ENCODE measurements at regions of chr1 and their contacts with region 1.

Region 1: GRCh38 chr1:157490467-157491165 is 61.7 kb downstream of the FCRL5 start:
- DNase-seq: peak; percentile 43 to 82 (median 47)
- ATAC-seq: peak; percentile 84
- H3K4me3 ChIP-seq: no peak overlapping the region
- H3K27ac ChIP-seq: no peak overlapping the region
- H3K4me1 ChIP-seq: peaks cover 7 to 18% of the 10 kb centered on the region in 2 experiments; a peak in 4 of 5 replicates
- H3K27me3 ChIP-seq: peaks cover 0 to 9% of the 10 kb centered on the region in 2 experiments; a peak in 2 of 5 replicates
- CTCF ChIP-seq: peak; percentile 74 to 88 (median 85)
- EP300 ChIP-seq: no peak
- POLR2A ChIP-seq: no peak
- RAD21 ChIP-seq: peak; percentile 79 to 85

Region 2: DNA sequence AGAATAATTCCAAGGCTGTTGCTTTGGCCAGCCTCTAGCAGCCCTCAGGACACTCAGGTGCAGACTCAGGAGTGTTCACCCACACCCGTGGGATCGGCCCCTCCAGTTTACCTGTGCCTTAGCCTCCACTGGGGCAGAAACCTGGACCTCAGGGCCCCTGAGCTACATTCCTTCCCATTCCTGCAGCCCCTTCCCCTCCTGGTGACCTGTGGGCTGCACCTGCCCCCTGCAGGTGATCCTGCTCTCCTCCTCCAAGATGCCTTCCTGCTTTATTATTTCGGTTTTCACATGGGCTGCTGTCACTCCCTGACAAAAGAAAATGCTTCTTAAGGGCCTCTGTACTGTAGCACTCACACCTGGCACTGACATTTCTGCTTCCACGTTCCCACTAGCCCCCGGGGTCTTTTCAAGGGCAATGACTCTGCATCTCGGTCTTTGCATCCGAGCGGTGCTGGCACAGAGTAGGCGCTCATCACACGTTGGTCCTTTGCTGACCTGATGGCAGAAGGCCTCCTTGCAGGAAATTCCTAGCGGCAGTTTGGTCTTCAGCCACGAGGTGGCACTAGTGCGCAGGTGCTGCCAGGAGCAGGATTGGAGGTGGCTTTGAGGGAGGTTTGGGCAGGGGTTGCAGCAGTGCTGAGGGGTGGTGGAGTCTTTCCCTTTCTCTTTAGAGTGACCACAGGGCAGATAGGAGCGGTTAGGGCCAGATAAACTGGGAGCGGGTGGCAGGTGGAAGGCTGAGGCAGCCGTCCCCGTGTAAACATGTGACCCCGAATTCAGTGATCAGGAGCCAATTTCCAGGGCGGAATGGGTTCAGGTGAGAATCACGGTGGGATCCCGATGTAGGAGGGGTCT is 327.1 kb before region 1 on chr1:
- CTCF ChIA-PET with region 1: no interaction called
- POLR2A ChIA-PET with region 1: no interaction called
- in situ Hi-C with region 1: loop called (anchors 10 kb)
- intact Hi-C with region 1: no loop called
- DNase-seq: peak; percentile 72 to 80 (median 76)
- ATAC-seq: peak; percentile 92
- H3K4me3 ChIP-seq: no peak overlapping the region
- H3K27ac ChIP-seq: no peak overlapping the region
- H3K4me1 ChIP-seq: peaks cover 0 to 4% of the 10 kb centered on the region in 2 experiments; a peak in 1 of 5 replicates
- H3K27me3 ChIP-seq: peaks cover 40 to 74% of the 10 kb centered on the region in 2 experiments
- CTCF ChIP-seq: peak; percentile 84 to 94 (median 89)
- EP300 ChIP-seq: no peak
- POLR2A ChIP-seq: no peak
- RAD21 ChIP-seq: peak; percentile 37 to 53; a peak in 3 of 4 replicates

Region 3: GRCh38 chr1:157307491-157307890 is 183.1 kb before region 1 on chr1:
- CTCF ChIA-PET with region 1: interaction called, 25 read pairs
- POLR2A ChIA-PET with region 1: no interaction called
- in situ Hi-C with region 1: loop called (anchors 5 kb)
- intact Hi-C with region 1: loop called (anchors 1 kb)
- DNase-seq: no peak
- ATAC-seq: no peak
- H3K4me3 ChIP-seq: no peak overlapping the region
- H3K27ac ChIP-seq: no peak overlapping the region
- H3K4me1 ChIP-seq: peaks cover 10 to 32% of the 10 kb centered on the region in 2 experiments
- H3K27me3 ChIP-seq: no peaks in the 10 kb centered on the region
- CTCF ChIP-seq: no peak
- EP300 ChIP-seq: no peak
- POLR2A ChIP-seq: no peak
- RAD21 ChIP-seq: no peak

Region 4: DNA sequence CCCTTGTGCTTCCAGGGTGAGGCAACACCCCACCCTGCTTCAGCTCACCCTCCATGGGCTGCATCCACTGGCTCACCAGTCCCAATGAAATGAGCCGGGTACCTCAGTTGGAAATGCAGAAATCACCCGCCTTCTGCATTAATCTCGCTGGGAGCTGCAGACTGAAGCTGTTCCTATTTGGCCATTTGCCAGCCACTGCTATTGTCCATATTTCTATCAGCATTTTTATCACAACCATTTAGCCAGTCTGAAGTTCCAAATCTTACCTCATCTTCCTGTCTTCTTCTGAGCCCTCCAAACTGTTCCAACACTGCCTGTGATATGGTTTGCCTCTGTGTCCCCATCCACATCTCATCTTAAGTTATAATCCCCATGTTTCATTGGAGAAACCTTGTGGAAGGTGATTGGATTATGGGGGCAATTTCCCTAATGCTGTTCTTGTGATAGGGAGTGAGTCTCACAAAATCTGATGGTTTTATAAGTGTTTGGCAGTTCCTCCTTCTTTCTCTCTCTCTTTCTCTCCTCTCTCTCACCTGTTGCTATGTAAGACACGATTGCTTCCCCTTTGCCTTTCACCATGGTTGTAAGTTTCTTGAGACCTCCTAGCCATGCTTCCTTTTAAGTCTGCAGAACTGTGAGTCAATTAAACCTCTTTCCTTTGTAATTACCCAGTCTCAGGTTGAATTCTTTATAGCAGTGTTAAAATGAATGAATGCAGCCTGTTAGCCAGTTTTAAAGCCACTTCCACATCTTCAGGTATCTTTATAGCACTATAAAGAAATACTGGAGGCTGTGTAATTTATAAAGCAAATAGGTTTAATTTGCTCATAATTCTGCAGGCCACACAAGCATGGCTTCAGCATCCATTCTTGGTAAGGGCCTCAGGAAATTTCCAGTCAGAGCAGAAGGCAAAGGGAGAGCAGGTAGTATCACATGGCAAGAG is 141.8 kb before region 1 on chr1:
- CTCF ChIA-PET with region 1: no interaction called
- POLR2A ChIA-PET with region 1: no interaction called
- in situ Hi-C with region 1: no loop called
- intact Hi-C with region 1: no loop called
- DNase-seq: no peak
- ATAC-seq: no peak
- H3K4me3 ChIP-seq: no peak overlapping the region
- H3K27ac ChIP-seq: no peak overlapping the region
- H3K4me1 ChIP-seq: no peaks in the 10 kb centered on the region; a peak in 2 of 5 replicates
- H3K27me3 ChIP-seq: no peaks in the 10 kb centered on the region
- CTCF ChIP-seq: no peak
- EP300 ChIP-seq: no peak
- POLR2A ChIP-seq: no peak
- RAD21 ChIP-seq: no peak

Region 5: GRCh38 chr1:157369808-157370521 is 120.7 kb before region 1 on chr1:
- CTCF ChIA-PET with region 1: interaction called, 13 read pairs
- POLR2A ChIA-PET with region 1: no interaction called
- in situ Hi-C with region 1: loop called (anchors 5 kb)
- intact Hi-C with region 1: loop called (anchors 1 kb)
- DNase-seq: peak; percentile 61 to 88 (median 66)
- ATAC-seq: peak; percentile 80
- H3K4me3 ChIP-seq: no peak overlapping the region
- H3K27ac ChIP-seq: peak overlapping the region; percentile 13; the same call in 1 of the 3 replicates
- H3K4me1 ChIP-seq: peaks cover 13 to 54% of the 10 kb centered on the region in 2 experiments; a peak in 4 of 5 replicates
- H3K27me3 ChIP-seq: no peaks in the 10 kb centered on the region
- CTCF ChIP-seq: peak; percentile 80 to 86 (median 85)
- EP300 ChIP-seq: no peak
- POLR2A ChIP-seq: no peak
- RAD21 ChIP-seq: peak; percentile 84 to 88

Region 6: GRCh38 chr1:157400766-157401165 is 89.8 kb before region 1 on chr1:
- CTCF ChIA-PET with region 1: no interaction called
- POLR2A ChIA-PET with region 1: no interaction called
- in situ Hi-C with region 1: no loop called
- intact Hi-C with region 1: no loop called
- DNase-seq: no peak
- ATAC-seq: no peak
- H3K4me3 ChIP-seq: no peak overlapping the region
- H3K27ac ChIP-seq: no peak overlapping the region
- H3K4me1 ChIP-seq: peaks cover 7 to 22% of the 10 kb centered on the region in 2 experiments
- H3K27me3 ChIP-seq: no peaks in the 10 kb centered on the region
- CTCF ChIP-seq: no peak
- EP300 ChIP-seq: no peak
- POLR2A ChIP-seq: no peak
- RAD21 ChIP-seq: no peak

Region 7: DNA sequence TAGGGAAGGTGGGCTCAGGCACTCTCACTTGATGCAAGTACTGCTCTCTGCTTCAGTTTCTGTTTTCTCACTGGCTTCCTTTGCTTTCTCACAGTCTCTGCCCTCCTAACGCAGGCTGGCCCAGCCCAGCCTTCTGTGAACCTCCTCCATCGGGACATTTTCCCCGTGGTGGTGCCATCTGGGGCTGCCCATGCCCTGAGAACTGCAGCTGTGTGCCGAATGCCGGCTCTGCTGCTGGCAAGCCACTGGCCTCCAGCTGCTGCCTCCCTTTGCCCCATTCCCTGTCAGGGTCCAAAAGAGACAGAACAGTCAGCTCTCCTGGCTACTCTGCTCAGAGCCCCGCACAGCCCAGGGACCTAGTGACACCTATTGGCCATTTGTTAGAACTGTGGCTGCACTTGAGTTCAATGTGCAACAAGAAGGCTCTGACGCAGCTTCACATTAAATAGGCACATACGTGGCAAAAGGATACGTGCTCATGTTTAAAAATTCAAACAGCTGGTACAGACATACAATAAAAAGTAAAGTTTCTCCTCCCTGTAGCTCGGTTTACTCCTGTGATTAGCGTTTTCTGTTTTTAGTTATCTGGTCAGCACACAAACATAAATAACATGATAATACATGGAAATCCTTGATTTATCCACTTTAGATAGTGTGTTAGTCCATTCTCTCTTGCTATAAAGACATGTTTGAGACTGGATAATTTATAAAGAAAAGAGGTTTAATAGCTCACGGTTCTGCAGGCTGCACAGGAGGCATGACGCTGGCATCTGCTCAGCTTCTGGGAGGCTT is 15.1 kb after region 1 on chr1:
- CTCF ChIA-PET with region 1: interaction called, 10 read pairs
- POLR2A ChIA-PET with region 1: no interaction called
- in situ Hi-C with region 1: no loop called
- intact Hi-C with region 1: no loop called
- DNase-seq: peak; percentile 41 to 69 (median 58)
- ATAC-seq: peak; percentile 99
- H3K4me3 ChIP-seq: no peak overlapping the region
- H3K27ac ChIP-seq: no peak overlapping the region
- H3K4me1 ChIP-seq: peaks cover 0 to 3% of the 10 kb centered on the region in 2 experiments; a peak in 1 of 5 replicates
- H3K27me3 ChIP-seq: peaks cover 0 to 10% of the 10 kb centered on the region in 2 experiments; a peak in 1 of 5 replicates
- CTCF ChIP-seq: peak; percentile 73 to 86 (median 80)
- EP300 ChIP-seq: no peak
- POLR2A ChIP-seq: no peak
- RAD21 ChIP-seq: peak; percentile 77 to 80